Activated CD4-positive, alpha-beta memory T cell treated with anti-CD3 and anti-CD28 coated beads for 36 hours (primary cell): ENCODE measurements at regions of chr2 and their contacts with region 1.

Region 1: GRCh38 chr2:206981739-206982340 is 42.5 kb downstream of the CPO start:
- DNase-seq: peak; percentile 70
- H3K4me3 Mint-ChIP-seq: no peak overlapping the region
- H3K27ac Mint-ChIP-seq: no peak overlapping the region
- H3K4me1 Mint-ChIP-seq: peaks cover 5% of the 10 kb centered on the region
- H3K27me3 Mint-ChIP-seq: no peaks in the 10 kb centered on the region

Region 2: DNA sequence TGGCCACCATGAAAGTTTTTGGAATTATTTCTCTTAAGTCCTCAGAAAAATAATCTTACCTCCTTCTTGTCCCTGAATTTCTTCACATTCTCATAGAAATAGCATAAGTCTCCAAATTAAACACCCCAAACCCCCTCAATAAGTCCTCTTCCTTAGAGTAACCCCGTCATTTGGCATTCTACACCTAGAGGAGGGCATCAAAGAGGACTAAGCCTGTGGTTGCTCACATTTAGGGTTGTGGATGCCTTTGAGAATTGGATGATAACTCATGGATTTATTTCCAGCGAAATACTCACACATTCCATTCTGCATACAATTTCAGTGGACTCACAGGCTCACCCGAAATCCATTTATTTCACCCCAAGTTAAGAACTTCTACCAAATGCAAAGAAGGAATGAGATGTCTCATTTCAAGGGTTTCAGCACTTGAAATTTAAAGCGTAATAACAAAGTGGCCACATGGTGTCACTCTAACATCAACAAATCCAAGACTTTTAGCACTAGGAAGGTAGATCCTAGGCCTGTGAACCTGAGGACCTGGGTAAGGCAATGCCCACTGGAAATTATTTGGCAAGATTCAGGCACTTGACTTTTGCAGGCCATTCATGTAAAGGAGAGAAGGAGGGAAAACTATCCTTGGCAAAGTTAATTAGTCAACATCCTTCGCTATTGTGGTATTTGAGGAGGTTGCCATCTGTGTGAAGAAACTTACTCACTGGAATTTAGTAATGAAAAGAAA is 288.3 kb before region 1 on chr2:
- CTCF ChIA-PET with region 1: interaction called, 3 read pairs
- POLR2A ChIA-PET with region 1: no interaction called
- intact Hi-C with region 1: loop called (anchors 10 kb)
- DNase-seq: no peak
- H3K4me3 Mint-ChIP-seq: no peak overlapping the region
- H3K27ac Mint-ChIP-seq: no peak overlapping the region
- H3K4me1 Mint-ChIP-seq: peaks cover 3% of the 10 kb centered on the region
- H3K27me3 Mint-ChIP-seq: no peaks in the 10 kb centered on the region